ENCODE measurements at regions of chr5 and their contacts with region 1.

Region 1: DNA sequence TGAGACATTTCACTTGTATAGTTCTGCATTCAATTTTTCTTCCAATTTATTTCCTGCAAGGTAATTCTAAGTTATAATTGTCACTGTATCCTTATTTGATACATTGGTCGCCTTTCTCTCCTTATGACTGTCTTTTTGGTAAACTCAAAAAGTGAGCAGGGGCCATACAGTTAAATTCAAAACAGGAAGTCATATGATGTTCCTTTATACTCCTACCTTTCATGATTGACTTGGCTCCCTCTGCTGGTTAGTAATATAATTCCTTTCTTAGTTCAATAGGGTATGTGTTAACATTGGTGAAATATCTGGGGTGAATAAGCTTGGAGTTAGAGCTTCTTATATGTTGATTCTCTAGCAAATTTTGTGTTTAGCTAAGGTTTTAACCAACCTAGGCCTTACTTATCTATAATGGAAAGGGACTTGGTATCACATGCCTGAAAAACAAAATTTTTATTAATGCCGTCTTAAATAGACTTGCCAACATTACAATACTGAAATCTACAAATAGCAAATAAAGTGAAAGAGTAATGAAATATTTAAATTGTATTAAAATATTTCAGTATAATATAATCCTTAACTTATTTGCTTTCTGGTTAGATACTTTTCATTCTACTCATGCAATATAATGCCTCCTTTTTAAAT is 6.0 kb upstream of the NIPBL start:
- DNase-seq: peak in 3 of 35 experiments; percentile 5 to 79 (median 11)
- ATAC-seq: peak; percentile 75 to 88 (median 85)
- H3K4me3 ChIP-seq: no peak overlapping the region
- H3K4me3 Mint-ChIP-seq: peak overlapping the region in 1 of 3 donors; percentile 17
- H3K27ac ChIP-seq: no peak overlapping the region
- H3K27ac Mint-ChIP-seq: peak overlapping the region; percentile 41 to 42
- H3K4me1 ChIP-seq: peaks cover 10 to 16% of the 10 kb centered on the region in 2 experiments
- H3K4me1 Mint-ChIP-seq: peaks cover 41 to 53% (median 44%) of the 10 kb centered on the region in 3 donors
- H3K27me3 ChIP-seq: no peaks in the 10 kb centered on the region
- H3K27me3 Mint-ChIP-seq: no peaks in the 10 kb centered on the region

Region 2: DNA sequence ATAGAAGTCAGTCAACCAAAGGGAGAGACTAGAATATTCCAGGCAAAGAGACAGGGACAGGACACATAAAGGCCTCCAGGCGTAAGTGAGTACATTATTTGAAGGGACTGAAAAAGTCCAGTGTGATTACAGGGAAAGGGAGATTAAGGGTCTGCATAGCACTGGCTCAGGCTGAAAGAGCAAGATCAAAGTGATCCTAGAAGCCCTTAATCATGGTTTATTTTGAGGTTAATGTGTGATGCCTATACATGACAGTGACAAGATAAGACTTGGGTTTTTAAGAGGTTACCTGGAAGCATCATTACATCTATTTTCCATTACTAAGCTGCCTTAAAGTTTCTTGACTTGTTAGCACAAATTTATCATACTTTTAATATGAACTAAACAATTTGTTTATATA is 744.7 kb before region 1 on chr5:
- CTCF ChIA-PET with region 1: no interaction called
- POLR2A ChIA-PET with region 1: no interaction called
- DNase-seq: no peak
- ATAC-seq: no peak
- H3K4me3 ChIP-seq: no peak overlapping the region
- H3K4me3 Mint-ChIP-seq: no peak overlapping the region
- H3K27ac ChIP-seq: no peak overlapping the region
- H3K27ac Mint-ChIP-seq: no peak overlapping the region
- H3K4me1 ChIP-seq: no peaks in the 10 kb centered on the region
- H3K4me1 Mint-ChIP-seq: peaks cover 10 to 26% (median 15%) of the 10 kb centered on the region in 3 donors
- H3K27me3 ChIP-seq: no peaks in the 10 kb centered on the region
- H3K27me3 Mint-ChIP-seq: no peaks in the 10 kb centered on the region

Region 3: DNA sequence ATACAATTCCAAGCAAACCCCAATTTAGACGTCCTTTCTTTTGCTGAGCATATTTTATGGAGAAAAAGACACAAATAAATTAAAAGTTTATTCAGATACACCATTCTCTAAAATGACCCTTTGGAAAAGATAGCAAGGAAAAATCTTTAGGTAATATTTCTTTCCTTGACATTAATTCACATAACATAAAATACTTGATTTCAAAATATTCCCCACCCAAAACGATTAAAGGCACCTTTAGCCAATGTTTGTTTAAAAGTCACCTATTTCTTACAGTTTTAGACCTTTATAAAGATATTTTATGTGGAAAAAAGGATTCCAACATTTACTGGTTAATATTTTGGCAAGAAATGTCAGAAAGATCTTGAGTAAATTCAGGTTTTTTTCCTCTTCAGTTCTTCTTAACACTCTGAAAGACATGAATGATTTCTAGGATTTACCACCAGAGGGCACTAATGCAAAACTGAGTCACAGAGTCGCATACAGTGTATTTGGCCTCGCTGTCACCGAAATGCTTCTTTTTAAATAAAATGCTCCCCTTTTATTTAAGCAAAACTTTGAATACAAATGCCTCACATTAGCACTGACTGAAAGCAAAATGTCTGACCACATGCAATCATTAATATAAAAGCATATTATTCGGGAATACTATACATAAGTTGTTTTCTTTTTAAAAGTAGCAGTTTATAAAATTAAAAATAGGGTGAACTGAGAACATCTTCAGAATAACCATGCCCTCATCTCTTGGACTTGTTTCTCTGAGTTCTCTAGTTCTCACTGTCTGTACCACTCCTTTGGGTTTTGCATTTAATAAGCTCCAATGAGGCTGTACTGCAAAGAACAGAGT is 141.6 kb before region 1 on chr5:
- CTCF ChIA-PET with region 1: interaction called, 3 to 11 read pairs
- POLR2A ChIA-PET with region 1: no interaction called
- DNase-seq: peak in 4 of 35 experiments; percentile 9 to 75 (median 21)
- ATAC-seq: peak; percentile 44 to 61 (median 60)
- H3K4me3 ChIP-seq: no peak overlapping the region
- H3K4me3 Mint-ChIP-seq: no peak overlapping the region
- H3K27ac ChIP-seq: no peak overlapping the region
- H3K27ac Mint-ChIP-seq: no peak overlapping the region
- H3K4me1 ChIP-seq: peaks cover 3 to 9% of the 10 kb centered on the region in 2 experiments
- H3K4me1 Mint-ChIP-seq: peaks cover 16 to 19% (median 17%) of the 10 kb centered on the region in 3 donors
- H3K27me3 ChIP-seq: no peaks in the 10 kb centered on the region
- H3K27me3 Mint-ChIP-seq: peaks cover 3 to 7% of the 10 kb centered on the region in 2 donors

Region 4: GRCh38 chr5:36881807-36882206 is 11.3 kb after region 1 on chr5:
- CTCF ChIA-PET with region 1: interaction called, 3 to 4 read pairs
- POLR2A ChIA-PET with region 1: interaction called, 3 to 10 read pairs
- DNase-seq: no peak
- ATAC-seq: no peak
- H3K4me3 ChIP-seq: no peak overlapping the region
- H3K4me3 Mint-ChIP-seq: peak overlapping the region in 2 of 3 donors; percentile 10 to 32
- H3K27ac ChIP-seq: no peak overlapping the region
- H3K27ac Mint-ChIP-seq: no peak overlapping the region
- H3K4me1 ChIP-seq: peaks cover 18 to 41% of the 10 kb centered on the region in 2 experiments
- H3K4me1 Mint-ChIP-seq: peaks cover 60 to 74% (median 67%) of the 10 kb centered on the region in 3 donors
- H3K27me3 ChIP-seq: no peaks in the 10 kb centered on the region
- H3K27me3 Mint-ChIP-seq: no peaks in the 10 kb centered on the region

Region 5: GRCh38 chr5:36944607-36945225 is 74.2 kb after region 1 on chr5:
- CTCF ChIA-PET with region 1: interaction called, 3 to 4 read pairs
- POLR2A ChIA-PET with region 1: interaction called in 1 of 2 experiments, 10 read pairs
- DNase-seq: peak in 1 of 35 experiments; percentile 75
- ATAC-seq: no peak
- H3K4me3 ChIP-seq: no peak overlapping the region
- H3K4me3 Mint-ChIP-seq: no peak overlapping the region
- H3K27ac ChIP-seq: no peak overlapping the region
- H3K27ac Mint-ChIP-seq: no peak overlapping the region
- H3K4me1 ChIP-seq: peaks cover 0 to 4% of the 10 kb centered on the region in 2 experiments
- H3K4me1 Mint-ChIP-seq: peaks cover 51 to 66% (median 63%) of the 10 kb centered on the region in 3 donors
- H3K27me3 ChIP-seq: no peaks in the 10 kb centered on the region
- H3K27me3 Mint-ChIP-seq: no peaks in the 10 kb centered on the region

Region 6: DNA sequence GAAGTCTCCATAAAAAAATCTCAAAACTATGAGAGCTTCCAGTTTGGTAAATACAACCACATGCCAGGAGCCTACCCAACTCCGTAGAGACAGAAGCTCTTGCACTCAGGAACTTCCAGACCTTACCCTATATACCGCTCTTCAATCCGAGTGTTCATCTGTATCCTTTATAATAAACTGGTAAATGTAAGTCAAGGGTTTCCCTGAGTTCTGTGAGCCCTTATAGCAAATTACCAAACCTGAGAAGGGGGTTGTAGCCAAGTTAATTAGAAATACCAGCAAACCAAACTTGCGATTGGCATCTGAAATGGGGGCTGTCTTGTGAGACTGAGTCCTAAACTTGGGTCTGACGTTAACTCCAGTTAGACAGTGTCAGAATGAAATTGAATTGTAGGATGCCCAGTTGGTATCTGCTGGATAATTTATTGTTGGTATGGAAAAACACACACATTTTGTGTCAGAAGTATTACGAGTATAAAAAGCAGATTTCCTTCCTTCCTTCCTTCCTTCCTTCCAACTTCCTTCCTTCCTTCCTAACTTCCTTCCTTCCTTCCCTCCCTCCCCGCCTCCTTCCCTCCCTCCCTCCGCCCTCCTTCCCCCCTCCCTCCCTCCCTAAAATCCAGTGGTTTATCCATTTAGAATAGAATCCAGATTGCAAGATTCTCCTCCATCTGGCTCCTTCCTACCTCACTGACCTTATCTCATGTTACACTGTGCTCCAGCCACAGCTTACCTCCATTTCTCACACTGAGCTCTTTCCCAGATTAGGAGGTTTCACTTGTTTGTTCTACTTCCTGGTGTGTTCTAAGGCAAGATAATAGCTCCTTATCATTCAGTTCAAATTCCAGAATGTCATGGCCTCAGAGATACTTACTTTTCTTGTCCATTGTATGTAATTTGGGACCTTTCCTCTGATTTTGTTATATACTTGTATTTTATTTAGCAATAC is 705.3 kb after region 1 on chr5:
- CTCF ChIA-PET with region 1: no interaction called
- POLR2A ChIA-PET with region 1: no interaction called
- DNase-seq: no peak
- ATAC-seq: no peak
- H3K4me3 ChIP-seq: no peak overlapping the region
- H3K4me3 Mint-ChIP-seq: no peak overlapping the region
- H3K27ac ChIP-seq: no peak overlapping the region
- H3K27ac Mint-ChIP-seq: no peak overlapping the region
- H3K4me1 ChIP-seq: no peaks in the 10 kb centered on the region
- H3K4me1 Mint-ChIP-seq: peaks cover 29 to 38% (median 31%) of the 10 kb centered on the region in 3 donors
- H3K27me3 ChIP-seq: no peaks in the 10 kb centered on the region
- H3K27me3 Mint-ChIP-seq: no peaks in the 10 kb centered on the region